ENCODE measurements at regions of chr1 and their contacts with region 1.

Region 1: GRCh38 chr1:185317034-185317885 is at the start of gene IVNS1ABP:
- DNase-seq: peak; percentile 97
- ATAC-seq: peak; percentile 81
- H3K4me3 Mint-ChIP-seq: peak within 1 kb of the TSS; percentile 97
- H3K27ac Mint-ChIP-seq: peak within 1 kb of the TSS; percentile 95
- H3K4me1 Mint-ChIP-seq: peaks cover 43% of the 10 kb centered on the region
- H3K27me3 Mint-ChIP-seq: no peaks in the 10 kb centered on the region
- CTCF ChIP-seq: peak; percentile 6
- total RNA-seq, gene IVNS1ABP: 244 to 256 TPM

Region 2: DNA sequence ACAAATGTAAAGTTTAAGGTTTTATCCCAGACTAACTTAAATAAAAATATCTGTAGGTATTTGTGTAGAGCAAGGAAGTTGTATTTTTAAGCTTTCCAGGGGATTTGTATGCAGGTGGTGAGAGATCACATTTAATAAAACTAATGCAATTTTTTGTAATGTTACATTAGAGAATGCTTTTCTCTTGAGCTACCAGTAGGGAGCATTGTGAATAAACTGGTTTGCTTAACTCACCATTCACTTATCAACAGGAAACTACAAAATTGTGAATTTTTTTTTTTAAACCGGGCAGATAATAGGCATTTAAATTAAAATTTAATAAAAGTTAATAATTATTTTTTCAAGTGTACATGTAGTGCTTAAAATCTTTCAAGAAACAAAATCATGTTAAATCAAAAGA is 78.8 kb before region 1 on chr1:
- CTCF ChIA-PET with region 1: no interaction called
- POLR2A ChIA-PET with region 1: interaction called, 11 read pairs
- intact Hi-C with region 1: no loop called
- DNase-seq: no peak
- ATAC-seq: peak; percentile 64
- H3K4me3 Mint-ChIP-seq: no peak overlapping the region
- H3K27ac Mint-ChIP-seq: no peak overlapping the region
- H3K4me1 Mint-ChIP-seq: peaks cover 26% of the 10 kb centered on the region
- H3K27me3 Mint-ChIP-seq: no peaks in the 10 kb centered on the region
- CTCF ChIP-seq: peak; percentile 48

Region 3: GRCh38 chr1:185271931-185272330 is 45.3 kb before region 1 on chr1:
- CTCF ChIA-PET with region 1: no interaction called
- POLR2A ChIA-PET with region 1: no interaction called
- intact Hi-C with region 1: no loop called
- DNase-seq: no peak
- ATAC-seq: no peak
- H3K4me3 Mint-ChIP-seq: no peak overlapping the region
- H3K27ac Mint-ChIP-seq: no peak overlapping the region
- H3K4me1 Mint-ChIP-seq: no peaks in the 10 kb centered on the region
- H3K27me3 Mint-ChIP-seq: no peaks in the 10 kb centered on the region
- CTCF ChIP-seq: no peak

Region 4: GRCh38 chr1:185338719-185339622 is 21.7 kb after region 1 on chr1:
- CTCF ChIA-PET with region 1: interaction called, 3 read pairs
- POLR2A ChIA-PET with region 1: interaction called, 12 read pairs
- intact Hi-C with region 1: no loop called
- DNase-seq: peak; percentile 75
- ATAC-seq: peak; percentile 83
- H3K4me3 Mint-ChIP-seq: peak overlapping the region; percentile 7
- H3K27ac Mint-ChIP-seq: peak overlapping the region; percentile 81
- H3K4me1 Mint-ChIP-seq: peaks cover 37% of the 10 kb centered on the region
- H3K27me3 Mint-ChIP-seq: no peaks in the 10 kb centered on the region
- CTCF ChIP-seq: no peak

Region 5: DNA sequence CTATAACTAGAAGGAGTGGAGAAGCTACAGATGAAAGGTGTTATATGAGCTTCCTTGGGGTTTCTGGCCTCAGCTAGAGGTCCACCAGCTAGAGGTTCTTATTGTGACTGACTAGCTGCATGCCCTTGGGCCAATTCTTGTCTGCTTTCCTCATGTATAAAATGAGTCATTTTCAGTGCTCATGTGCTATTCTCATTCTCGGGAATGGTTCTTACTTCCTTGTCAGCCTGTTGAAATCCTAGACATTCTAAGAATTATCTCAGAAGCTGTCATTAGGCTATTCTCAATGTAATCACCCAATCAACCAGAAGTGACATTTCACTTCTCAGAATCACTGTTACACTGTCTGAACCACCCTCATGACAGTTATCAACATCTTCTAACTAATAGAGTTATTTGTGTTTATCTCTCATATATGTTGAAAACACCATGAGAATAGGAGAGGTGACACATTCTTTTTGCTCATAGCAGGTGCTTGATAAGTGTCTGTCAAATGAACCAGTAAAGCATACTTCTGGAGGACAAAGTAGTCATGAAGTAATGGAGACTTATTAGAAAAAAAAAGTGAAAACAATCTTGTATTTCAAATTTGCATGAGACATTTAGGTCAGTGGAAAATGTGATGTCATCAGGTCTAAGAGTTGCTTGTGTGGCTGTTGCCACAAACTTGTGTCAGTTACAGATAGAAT is 122.6 kb after region 1 on chr1:
- CTCF ChIA-PET with region 1: interaction called, 4 read pairs
- POLR2A ChIA-PET with region 1: interaction called, 23 read pairs
- intact Hi-C with region 1: loop called (anchors 2 kb)
- DNase-seq: peak; percentile 77
- ATAC-seq: peak; percentile 87
- H3K4me3 Mint-ChIP-seq: no peak overlapping the region
- H3K27ac Mint-ChIP-seq: no peak overlapping the region
- H3K4me1 Mint-ChIP-seq: peaks cover 16% of the 10 kb centered on the region
- H3K27me3 Mint-ChIP-seq: no peaks in the 10 kb centered on the region
- CTCF ChIP-seq: no peak

Region 6: DNA sequence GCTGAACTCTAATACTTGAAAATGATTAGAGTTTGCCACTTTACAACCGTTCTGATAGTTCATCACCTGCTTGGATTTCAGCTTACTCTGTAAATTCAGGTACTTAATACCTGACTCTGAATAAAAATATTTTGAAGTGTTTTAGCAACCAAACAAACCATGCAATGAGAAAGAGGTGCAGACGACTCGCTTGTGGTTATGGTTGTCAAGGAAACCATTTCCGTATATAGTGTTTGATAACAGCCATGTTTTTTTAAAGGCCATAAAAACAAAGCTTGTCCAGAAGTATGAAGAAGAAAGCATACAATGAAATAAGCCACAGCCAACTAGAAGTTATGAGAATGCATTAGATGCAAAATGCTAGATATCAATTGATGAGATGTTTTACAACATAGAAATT is 249.7 kb after region 1 on chr1:
- CTCF ChIA-PET with region 1: interaction called, 5 read pairs
- POLR2A ChIA-PET with region 1: interaction called, 8 read pairs
- intact Hi-C with region 1: loop called (anchors 2 kb)
- DNase-seq: peak; percentile 68
- ATAC-seq: peak; percentile 65
- H3K4me3 Mint-ChIP-seq: no peak overlapping the region
- H3K27ac Mint-ChIP-seq: peak overlapping the region; percentile 86
- H3K4me1 Mint-ChIP-seq: peaks cover 59% of the 10 kb centered on the region
- H3K27me3 Mint-ChIP-seq: no peaks in the 10 kb centered on the region
- CTCF ChIP-seq: no peak

Region 7: GRCh38 chr1:185670187-185670627 is 352.9 kb after region 1 on chr1:
- CTCF ChIA-PET with region 1: interaction called, 8 read pairs
- POLR2A ChIA-PET with region 1: interaction called, 6 read pairs
- intact Hi-C with region 1: loop called (anchors 2 kb)
- DNase-seq: peak; percentile 79
- ATAC-seq: peak; percentile 82
- H3K4me3 Mint-ChIP-seq: no peak overlapping the region
- H3K27ac Mint-ChIP-seq: peak overlapping the region; percentile 31
- H3K4me1 Mint-ChIP-seq: peaks cover 23% of the 10 kb centered on the region
- H3K27me3 Mint-ChIP-seq: no peaks in the 10 kb centered on the region
- CTCF ChIP-seq: peak; percentile 61